ENCODE measurements at regions of chr16 and their contacts with region 1.

Region 1: DNA sequence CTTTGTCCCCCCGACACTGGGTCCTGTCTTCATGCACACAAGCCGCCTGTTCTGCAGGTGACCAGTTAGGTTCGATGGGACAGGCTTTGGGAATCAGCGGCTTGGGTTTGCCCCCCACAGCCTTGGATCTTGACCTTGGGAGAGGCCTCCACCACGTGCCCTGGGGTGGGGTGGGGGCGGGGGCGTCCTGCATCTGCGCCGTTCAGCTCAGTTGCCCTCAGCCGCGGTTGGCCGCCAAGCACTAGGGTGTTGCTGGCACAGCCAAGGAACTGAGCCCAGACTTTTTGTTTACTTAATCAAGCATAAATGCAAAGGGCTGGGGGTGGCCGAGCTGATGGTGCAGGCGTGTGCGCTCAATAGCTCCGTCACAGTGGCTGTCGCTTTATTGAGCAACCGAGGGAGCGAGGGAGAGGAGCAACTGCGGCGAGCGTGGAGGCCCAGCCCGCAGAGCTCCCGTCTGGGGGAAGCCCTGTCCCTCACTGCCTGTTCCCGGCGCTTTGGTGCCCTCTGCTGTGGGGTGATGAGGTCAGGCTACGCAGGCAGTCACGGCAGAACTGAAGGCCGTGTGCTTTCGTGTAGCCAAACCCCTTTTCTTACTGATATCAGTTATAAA is 33.9 kb downstream of the JPH3 start:
- DNase-seq: peak; percentile 63 to 90 (median 83)
- ATAC-seq: peak; percentile 85
- H3K4me3 ChIP-seq: peak overlapping the region; percentile 54 to 64
- H3K4me3 Mint-ChIP-seq: peak overlapping the region; percentile 87
- H3K27ac ChIP-seq: peak overlapping the region; percentile 47 to 49
- H3K27ac Mint-ChIP-seq: peak overlapping the region; percentile 93
- H3K4me1 ChIP-seq: peaks cover 17% of the 10 kb centered on the region
- H3K4me1 Mint-ChIP-seq: peaks cover 15% of the 10 kb centered on the region
- H3K27me3 ChIP-seq: peaks cover 0 to 2% of the 10 kb centered on the region in 2 experiments
- H3K27me3 Mint-ChIP-seq: no peaks in the 10 kb centered on the region
- CTCF ChIP-seq: peak; percentile 65

Region 2: GRCh38 chr16:86563489-86564345 is 1072.5 kb before region 1 on chr16:
- CTCF ChIA-PET with region 1: interaction called, 11 read pairs
- POLR2A ChIA-PET with region 1: no interaction called
- intact Hi-C with region 1: loop called in 1 of 2 experiments (anchors 1 kb)
- DNase-seq: peak; percentile 72 to 91 (median 86)
- ATAC-seq: peak; percentile 100
- H3K4me3 ChIP-seq: peak overlapping the region in 1 of 2 experiments; percentile 24
- H3K4me3 Mint-ChIP-seq: peak overlapping the region; percentile 62
- H3K27ac ChIP-seq: no peak overlapping the region
- H3K27ac Mint-ChIP-seq: no peak overlapping the region
- H3K4me1 ChIP-seq: peaks cover 22% of the 10 kb centered on the region
- H3K4me1 Mint-ChIP-seq: peaks cover 23% of the 10 kb centered on the region
- H3K27me3 ChIP-seq: peaks cover 18 to 25% of the 10 kb centered on the region in 2 experiments
- H3K27me3 Mint-ChIP-seq: peaks cover 52% of the 10 kb centered on the region
- CTCF ChIP-seq: peak; percentile 100

Region 3: GRCh38 chr16:86882586-86883280 is 753.4 kb before region 1 on chr16:
- CTCF ChIA-PET with region 1: no interaction called
- POLR2A ChIA-PET with region 1: no interaction called
- intact Hi-C with region 1: no loop called
- DNase-seq: no peak
- ATAC-seq: no peak
- H3K4me3 ChIP-seq: no peak overlapping the region
- H3K4me3 Mint-ChIP-seq: no peak overlapping the region
- H3K27ac ChIP-seq: no peak overlapping the region
- H3K27ac Mint-ChIP-seq: no peak overlapping the region
- H3K4me1 ChIP-seq: no peaks in the 10 kb centered on the region
- H3K4me1 Mint-ChIP-seq: no peaks in the 10 kb centered on the region
- H3K27me3 ChIP-seq: peaks cover 4% of the 10 kb centered on the region in 2 experiments
- H3K27me3 Mint-ChIP-seq: peaks cover 54% of the 10 kb centered on the region
- CTCF ChIP-seq: no peak

Region 4: GRCh38 chr16:87387942-87388817 is 248.0 kb before region 1 on chr16:
- CTCF ChIA-PET with region 1: interaction called, 19 read pairs
- POLR2A ChIA-PET with region 1: interaction called, 5 read pairs
- intact Hi-C with region 1: loop called in 1 of 2 experiments (anchors 2 kb)
- DNase-seq: peak; percentile 76 to 97 (median 86)
- ATAC-seq: peak; percentile 65
- H3K4me3 ChIP-seq: peak overlapping the region; percentile 4 to 13
- H3K4me3 Mint-ChIP-seq: peak overlapping the region; percentile 30
- H3K27ac ChIP-seq: peak overlapping the region; percentile 53 to 89
- H3K27ac Mint-ChIP-seq: peak overlapping the region; percentile 97
- H3K4me1 ChIP-seq: peaks cover 22% of the 10 kb centered on the region
- H3K4me1 Mint-ChIP-seq: peaks cover 38% of the 10 kb centered on the region
- H3K27me3 ChIP-seq: no peaks in the 10 kb centered on the region
- H3K27me3 Mint-ChIP-seq: no peaks in the 10 kb centered on the region
- CTCF ChIP-seq: no peak

Region 5: DNA sequence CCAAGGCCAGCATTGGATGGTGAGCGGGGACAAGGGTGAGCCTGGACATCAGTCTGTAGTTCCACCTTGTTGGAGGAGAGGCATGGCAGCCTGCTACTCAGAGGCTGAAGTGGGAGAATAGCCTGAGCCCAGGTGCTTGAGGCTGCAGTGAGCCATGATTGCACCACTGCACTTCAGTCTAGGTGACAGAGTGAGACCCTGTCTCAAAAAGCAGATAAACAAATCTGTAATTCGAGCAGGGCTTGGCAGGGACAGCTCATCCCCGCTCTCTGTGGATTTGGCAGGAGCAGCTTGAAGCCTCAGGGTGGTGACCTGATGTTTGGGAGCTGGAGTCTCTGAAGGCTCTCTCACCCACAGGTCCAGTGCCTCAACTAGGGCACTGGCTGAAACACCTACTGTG is 104.8 kb before region 1 on chr16:
- CTCF ChIA-PET with region 1: interaction called, 10 read pairs
- POLR2A ChIA-PET with region 1: no interaction called
- intact Hi-C with region 1: no loop called
- DNase-seq: no peak
- ATAC-seq: no peak
- H3K4me3 ChIP-seq: no peak overlapping the region
- H3K4me3 Mint-ChIP-seq: no peak overlapping the region
- H3K27ac ChIP-seq: no peak overlapping the region
- H3K27ac Mint-ChIP-seq: no peak overlapping the region
- H3K4me1 ChIP-seq: no peaks in the 10 kb centered on the region
- H3K4me1 Mint-ChIP-seq: no peaks in the 10 kb centered on the region
- H3K27me3 ChIP-seq: no peaks in the 10 kb centered on the region
- H3K27me3 Mint-ChIP-seq: peaks cover 23% of the 10 kb centered on the region
- CTCF ChIP-seq: no peak

Region 6: DNA sequence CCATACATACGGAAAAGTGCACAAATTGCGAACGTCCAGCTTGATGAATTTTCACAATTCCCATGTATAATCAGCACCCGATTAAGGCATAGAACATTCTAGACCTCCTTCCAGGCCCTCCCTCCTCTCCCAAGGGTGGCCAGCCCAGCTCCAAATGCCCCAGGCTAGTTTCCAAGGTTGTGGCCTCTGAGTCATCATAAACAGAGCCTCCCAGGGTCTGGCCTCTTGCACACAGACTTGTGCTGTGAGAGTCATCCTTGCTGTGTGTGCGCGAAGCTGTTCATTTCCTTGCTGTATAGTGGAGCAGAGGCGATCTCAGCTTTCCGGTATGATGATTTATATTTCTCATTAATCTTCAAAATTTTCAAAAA is 54.4 kb before region 1 on chr16:
- CTCF ChIA-PET with region 1: interaction called, 54 read pairs
- POLR2A ChIA-PET with region 1: no interaction called
- intact Hi-C with region 1: no loop called
- DNase-seq: no peak
- ATAC-seq: no peak
- H3K4me3 ChIP-seq: no peak overlapping the region
- H3K4me3 Mint-ChIP-seq: no peak overlapping the region
- H3K27ac ChIP-seq: no peak overlapping the region
- H3K27ac Mint-ChIP-seq: no peak overlapping the region
- H3K4me1 ChIP-seq: no peaks in the 10 kb centered on the region
- H3K4me1 Mint-ChIP-seq: no peaks in the 10 kb centered on the region
- H3K27me3 ChIP-seq: peaks cover 0 to 3% of the 10 kb centered on the region in 2 experiments
- H3K27me3 Mint-ChIP-seq: peaks cover 41% of the 10 kb centered on the region
- CTCF ChIP-seq: no peak

Region 7: DNA sequence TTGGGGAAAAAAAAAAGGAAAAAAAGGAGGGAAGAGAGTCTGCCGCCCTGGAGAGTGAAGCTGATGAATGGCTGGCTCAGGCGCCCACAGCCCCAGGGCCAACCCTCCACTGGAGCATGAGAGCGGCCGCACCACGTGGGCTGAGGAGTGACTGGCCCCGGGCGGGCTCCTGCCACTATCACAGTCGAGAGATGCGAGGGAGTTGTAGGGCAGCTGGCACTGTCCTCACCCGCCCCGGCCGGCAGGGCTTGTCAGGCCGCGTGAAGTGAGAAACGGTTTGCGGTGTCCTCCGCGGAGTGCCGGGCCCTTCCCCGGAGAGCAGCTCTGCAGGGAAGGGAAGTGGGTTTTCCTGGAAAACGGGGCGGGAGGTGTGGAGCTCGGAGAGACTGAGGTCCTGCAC is 12.1 kb after region 1 on chr16:
- CTCF ChIA-PET with region 1: interaction called, 26 read pairs
- POLR2A ChIA-PET with region 1: no interaction called
- intact Hi-C with region 1: no loop called
- DNase-seq: no peak
- ATAC-seq: no peak
- H3K4me3 ChIP-seq: no peak overlapping the region
- H3K4me3 Mint-ChIP-seq: no peak overlapping the region
- H3K27ac ChIP-seq: no peak overlapping the region
- H3K27ac Mint-ChIP-seq: no peak overlapping the region
- H3K4me1 ChIP-seq: no peaks in the 10 kb centered on the region
- H3K4me1 Mint-ChIP-seq: no peaks in the 10 kb centered on the region
- H3K27me3 ChIP-seq: peaks cover 0 to 2% of the 10 kb centered on the region in 2 experiments
- H3K27me3 Mint-ChIP-seq: peaks cover 4% of the 10 kb centered on the region
- CTCF ChIP-seq: no peak